Activated CD4-positive, alpha-beta T cell treated with anti-CD3 and anti-CD28 coated beads for 36 hours (primary cell): ENCODE measurements at regions of chr1 and their contacts with region 1.

Region 1: GRCh38 chr1:204506961-204507387 is 9.2 kb upstream of the MDM4 start:
- DNase-seq: peak; percentile 91
- ATAC-seq: peak; percentile 72
- H3K4me3 Mint-ChIP-seq: peak overlapping the region; percentile 89
- H3K27ac Mint-ChIP-seq: peak overlapping the region; percentile 99
- H3K4me1 Mint-ChIP-seq: peaks cover 28% of the 10 kb centered on the region
- H3K27me3 Mint-ChIP-seq: peaks cover 2% of the 10 kb centered on the region

Region 2: GRCh38 chr1:203795441-203796235 is 711.3 kb before region 1 on chr1 and contains the starts of genes ZBED6 and ZC3H11A:
- CTCF ChIA-PET with region 1: no interaction called
- POLR2A ChIA-PET with region 1: no interaction called
- intact Hi-C with region 1: loop called in 1 of 2 experiments (anchors 5 kb)
- DNase-seq: peak; percentile 99
- ATAC-seq: peak; percentile 99
- H3K4me3 Mint-ChIP-seq: peak within 1 kb of the TSS; percentile 86
- H3K27ac Mint-ChIP-seq: peak within 1 kb of the TSS; percentile 96
- H3K4me1 Mint-ChIP-seq: peaks cover 45% of the 10 kb centered on the region
- H3K27me3 Mint-ChIP-seq: no peaks in the 10 kb centered on the region
- total RNA-seq, gene ZBED6: 16.4 to 19.3 TPM
- total RNA-seq, gene ZC3H11A: 92.8 to 112 TPM

Region 3: DNA sequence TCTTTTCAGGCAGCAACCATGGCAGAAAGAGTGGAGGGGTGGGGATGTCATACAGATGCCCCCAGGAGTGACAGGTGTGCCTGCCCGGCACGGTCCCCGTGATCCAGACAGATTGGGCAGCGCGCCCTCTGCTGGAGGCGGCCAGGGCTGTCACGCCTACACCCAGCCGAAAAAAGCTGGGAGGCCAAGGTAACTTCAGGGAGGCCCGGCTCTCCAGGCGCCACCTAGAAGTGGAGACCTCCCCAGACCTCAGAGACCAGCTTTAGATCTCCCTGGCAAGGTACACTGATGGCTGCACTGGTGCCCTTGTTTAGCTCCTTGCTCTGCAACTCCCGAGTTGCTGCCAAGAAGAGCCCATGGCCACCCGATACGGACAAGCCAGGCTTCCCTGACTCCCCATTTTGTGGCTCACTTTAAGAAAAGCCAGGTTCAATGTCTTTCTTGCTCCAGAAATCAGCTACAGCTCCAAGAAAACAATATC is 299.8 kb before region 1 on chr1:
- CTCF ChIA-PET with region 1: interaction called, 3 read pairs
- POLR2A ChIA-PET with region 1: no interaction called
- intact Hi-C with region 1: loop called in 1 of 2 experiments (anchors 5 kb)
- DNase-seq: peak; percentile 89
- ATAC-seq: peak; percentile 98
- H3K4me3 Mint-ChIP-seq: no peak overlapping the region
- H3K27ac Mint-ChIP-seq: no peak overlapping the region
- H3K4me1 Mint-ChIP-seq: peaks cover 12% of the 10 kb centered on the region
- H3K27me3 Mint-ChIP-seq: peaks cover 26% of the 10 kb centered on the region

Region 4: GRCh38 chr1:204250686-204251030 is 256.3 kb before region 1 on chr1:
- CTCF ChIA-PET with region 1: no interaction called
- POLR2A ChIA-PET with region 1: no interaction called
- intact Hi-C with region 1: no loop called
- DNase-seq: no peak
- ATAC-seq: no peak
- H3K4me3 Mint-ChIP-seq: no peak overlapping the region
- H3K27ac Mint-ChIP-seq: no peak overlapping the region
- H3K4me1 Mint-ChIP-seq: no peaks in the 10 kb centered on the region
- H3K27me3 Mint-ChIP-seq: peaks cover 2% of the 10 kb centered on the region

Region 5: DNA sequence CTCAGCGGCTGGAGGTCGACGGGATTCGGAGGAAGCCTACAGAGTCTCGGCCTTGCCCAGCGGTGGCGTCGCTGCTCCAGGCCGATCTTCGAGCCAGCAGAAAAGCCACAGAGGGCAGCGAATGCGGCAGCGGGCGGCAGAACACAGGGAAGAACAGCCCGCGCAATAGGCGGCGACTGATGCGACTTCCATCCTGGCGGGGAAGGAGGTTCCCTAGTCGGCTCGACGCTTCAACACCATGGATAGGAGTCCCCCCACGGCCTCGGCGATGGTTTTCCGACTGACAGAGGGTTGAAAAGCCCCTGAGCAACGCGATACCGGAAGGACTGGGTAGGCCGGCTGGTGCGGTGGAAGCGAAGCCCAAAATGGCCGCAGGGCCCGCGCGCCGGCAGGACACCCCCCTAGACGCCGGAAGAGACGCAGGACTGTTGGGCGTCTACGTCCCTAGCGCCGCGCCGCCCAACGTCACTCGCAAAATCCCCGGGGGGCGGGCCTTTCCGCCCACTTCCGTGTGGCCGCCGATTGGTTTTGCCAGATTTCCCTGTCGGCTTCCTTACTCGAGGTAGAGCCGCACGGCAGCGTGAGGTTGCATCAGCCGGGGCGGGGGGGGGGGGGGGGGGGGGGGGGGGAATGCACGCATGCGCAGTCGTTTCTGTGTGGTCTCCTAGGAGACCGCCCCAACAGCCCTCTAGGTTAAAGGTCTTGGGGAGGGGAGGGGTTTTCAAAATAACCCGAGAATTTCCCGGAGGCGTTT is 95.3 kb before region 1 on chr1 and contains the start of gene PPP1R15B:
- CTCF ChIA-PET with region 1: interaction called, 13 read pairs
- POLR2A ChIA-PET with region 1: no interaction called
- intact Hi-C with region 1: loop called (anchors 1 to 2 kb)
- DNase-seq: peak; percentile 98
- ATAC-seq: peak; percentile 92
- H3K4me3 Mint-ChIP-seq: peak within 1 kb of the TSS; percentile 98
- H3K27ac Mint-ChIP-seq: peak within 1 kb of the TSS; percentile 100
- H3K4me1 Mint-ChIP-seq: peaks cover 10% of the 10 kb centered on the region
- H3K27me3 Mint-ChIP-seq: no peaks in the 10 kb centered on the region
- total RNA-seq, gene PPP1R15B: 55.9 to 57.6 TPM

Region 6: GRCh38 chr1:204480515-204480914 is 26.5 kb before region 1 on chr1:
- CTCF ChIA-PET with region 1: interaction called, 47 read pairs
- POLR2A ChIA-PET with region 1: no interaction called
- intact Hi-C with region 1: no loop called
- DNase-seq: peak; percentile 33
- ATAC-seq: peak; percentile 67
- H3K4me3 Mint-ChIP-seq: no peak overlapping the region
- H3K27ac Mint-ChIP-seq: no peak overlapping the region
- H3K4me1 Mint-ChIP-seq: peaks cover 52% of the 10 kb centered on the region
- H3K27me3 Mint-ChIP-seq: no peaks in the 10 kb centered on the region

Region 7: GRCh38 chr1:205121660-205122488 is 614.9 kb after region 1 on chr1 and contains the start of gene RBBP5:
- CTCF ChIA-PET with region 1: no interaction called
- POLR2A ChIA-PET with region 1: no interaction called
- intact Hi-C with region 1: loop called in 1 of 2 experiments (anchors 1 kb)
- DNase-seq: peak; percentile 96
- ATAC-seq: peak; percentile 98
- H3K4me3 Mint-ChIP-seq: peak within 1 kb of the TSS; percentile 98
- H3K27ac Mint-ChIP-seq: peak within 1 kb of the TSS; percentile 100
- H3K4me1 Mint-ChIP-seq: peaks cover 38% of the 10 kb centered on the region
- H3K27me3 Mint-ChIP-seq: no peaks in the 10 kb centered on the region
- total RNA-seq, gene RBBP5: 23.1 to 24.3 TPM